ENCODE measurements at regions of chr7 and their contacts with region 1.

Region 1: GRCh38 chr7:45157653-45158401 is at the start of gene RAMP3:
- DNase-seq: peak; percentile 75
- H3K4me3 ChIP-seq: peak within 1 kb of the TSS in 6 of 8 donors; percentile 10 to 63 (median 28)
- H3K27ac ChIP-seq: peak within 1 kb of the TSS in 2 of 8 donors; percentile 3 to 56
- H3K4me1 ChIP-seq: peaks cover 0 to 36% (median 13%) of the 10 kb centered on the region in 6 donors
- H3K27me3 ChIP-seq: peaks cover 0 to 47% (median 21%) of the 10 kb centered on the region in 7 donors
- CTCF ChIP-seq: no peak
- POLR2A ChIP-seq: no peak
- total RNA-seq, gene RAMP3: 6.3 to 27.8 (median 11.8) TPM

Region 2: GRCh38 chr7:44434201-44434600 is 723.6 kb before region 1 on chr7:
- intact Hi-C with region 1: no loop called
- DNase-seq: no peak
- H3K4me3 ChIP-seq: no peak overlapping the region
- H3K27ac ChIP-seq: no peak overlapping the region
- H3K4me1 ChIP-seq: peaks cover 0 to 38% (median 2%) of the 10 kb centered on the region in 6 donors
- H3K27me3 ChIP-seq: no peaks in the 10 kb centered on the region
- CTCF ChIP-seq: no peak
- POLR2A ChIP-seq: no peak

Region 3: GRCh38 chr7:45259966-45260646 is 102.3 kb after region 1 on chr7:
- intact Hi-C with region 1: loop called (anchors 2 kb)
- DNase-seq: peak; percentile 92
- H3K4me3 ChIP-seq: no peak overlapping the region
- H3K27ac ChIP-seq: no peak overlapping the region
- H3K4me1 ChIP-seq: peaks cover 2 to 21% (median 12%) of the 10 kb centered on the region in 6 donors
- H3K27me3 ChIP-seq: peaks cover 0 to 27% (median 0%) of the 10 kb centered on the region in 7 donors
- CTCF ChIP-seq: peak; percentile 85 to 99 (median 95)
- POLR2A ChIP-seq: no peak

Measured in spleen (tissue), 13 donors.